Activated naive CD4-positive, alpha-beta T cell treated with anti-CD3 and anti-CD28 coated beads for 36 hours (primary cell): ENCODE measurements at regions of chr11 and their contacts with region 1.

Region 1: DNA sequence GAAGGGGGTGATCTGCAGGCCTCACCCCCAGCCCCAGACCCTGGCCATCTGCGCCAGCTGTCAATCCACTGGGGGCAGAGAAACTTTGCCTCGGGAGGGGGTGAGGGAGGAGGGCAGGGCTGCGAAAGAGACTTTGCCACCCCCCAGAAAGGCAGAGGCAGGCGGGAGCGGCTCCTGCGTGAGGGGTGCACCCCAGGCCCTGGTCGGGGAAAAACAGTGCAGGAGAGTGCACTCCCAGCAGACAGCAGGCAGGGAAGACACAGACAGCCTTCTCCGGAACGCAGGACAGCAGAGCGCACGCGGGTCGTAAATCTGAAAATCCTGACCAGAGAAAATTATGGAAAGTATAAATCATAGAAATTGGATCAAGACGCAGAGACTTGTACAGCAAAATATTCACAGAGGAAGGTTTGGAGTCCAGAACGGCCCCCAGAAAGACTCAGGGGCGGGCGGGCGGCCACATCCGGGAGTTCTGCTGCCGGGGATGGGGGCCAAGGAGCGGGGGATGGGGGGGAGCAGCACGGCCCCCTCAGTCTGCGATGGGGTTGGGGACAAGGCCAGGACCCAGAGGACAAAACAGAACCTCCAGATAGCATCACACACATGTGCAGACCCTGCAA is 8.0 kb upstream of the MRPL23 start:
- DNase-seq: no peak
- H3K4me3 Mint-ChIP-seq: no peak overlapping the region
- H3K27ac Mint-ChIP-seq: no peak overlapping the region
- H3K4me1 Mint-ChIP-seq: peaks cover 3% of the 10 kb centered on the region
- H3K27me3 Mint-ChIP-seq: no peaks in the 10 kb centered on the region

Region 2: DNA sequence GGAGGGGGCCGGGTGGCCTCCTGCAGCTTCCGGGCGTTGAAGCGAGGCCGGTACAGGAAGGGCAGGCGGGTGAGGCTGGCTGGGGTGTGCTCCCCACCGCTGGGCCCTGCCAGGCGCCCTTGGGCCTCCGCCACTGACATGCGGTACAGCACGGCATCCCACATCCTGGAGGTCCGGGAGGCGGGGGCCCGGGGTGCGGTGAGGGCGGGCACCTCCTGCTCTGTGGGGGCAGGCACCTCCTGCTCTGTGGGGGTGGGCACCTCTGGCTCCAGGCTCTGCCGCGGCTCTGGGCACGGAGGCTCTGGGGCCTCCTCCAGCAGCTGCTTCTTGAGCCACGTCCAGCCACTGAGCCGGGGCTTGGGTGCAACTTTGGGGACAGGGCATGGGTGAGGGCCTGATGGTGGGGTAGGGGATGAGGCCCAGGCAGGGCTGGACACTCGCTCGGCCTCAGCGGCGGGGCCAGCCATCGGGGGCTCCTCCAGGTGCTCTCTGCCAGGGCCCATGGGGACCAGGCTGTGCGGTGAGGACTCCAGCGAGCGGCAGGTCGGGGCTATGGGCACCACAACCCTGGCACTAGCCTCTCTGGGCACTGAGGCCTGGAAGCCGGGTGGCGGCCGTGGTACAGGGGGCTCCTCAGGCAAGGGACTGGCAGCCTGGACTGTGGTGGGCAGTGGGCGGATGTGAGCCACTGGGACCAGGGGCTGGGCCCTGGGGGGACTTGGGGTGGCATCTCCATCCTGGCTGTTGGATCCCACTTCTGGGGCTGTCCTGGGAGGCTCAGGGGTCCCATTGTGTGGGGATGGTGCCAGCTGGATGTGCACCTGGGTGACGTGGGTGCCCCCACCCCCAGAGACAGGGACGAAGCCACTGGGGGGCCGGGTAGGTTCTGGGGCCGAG is 49.6 kb before region 1 on chr11:
- CTCF ChIA-PET with region 1: no interaction called
- intact Hi-C with region 1: loop called (anchors 1 kb)
- DNase-seq: peak; percentile 84
- H3K4me3 Mint-ChIP-seq: peak overlapping the region; percentile 79
- H3K27ac Mint-ChIP-seq: peak overlapping the region; percentile 71
- H3K4me1 Mint-ChIP-seq: peaks cover 23% of the 10 kb centered on the region
- H3K27me3 Mint-ChIP-seq: no peaks in the 10 kb centered on the region

Region 3: DNA sequence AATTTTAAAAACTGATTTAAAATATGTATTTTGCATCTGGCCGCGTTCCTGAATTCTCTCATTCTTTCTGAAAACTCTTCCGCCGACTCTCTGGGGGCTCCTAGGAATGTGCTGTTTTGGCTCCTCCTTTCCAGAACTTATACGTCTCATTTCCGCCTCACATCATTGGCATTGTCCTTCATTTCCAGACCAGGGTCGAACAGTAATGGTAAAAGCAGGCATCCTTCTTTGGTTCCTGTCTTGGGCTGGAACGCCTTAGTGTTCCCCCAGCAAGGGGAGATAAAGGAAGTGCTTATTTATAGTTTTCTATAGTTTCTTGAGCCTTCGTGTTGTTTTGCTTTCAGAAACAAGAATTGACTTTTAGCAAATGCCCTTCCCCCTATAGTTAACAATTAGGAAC is 30.5 kb before region 1 on chr11:
- CTCF ChIA-PET with region 1: no interaction called
- intact Hi-C with region 1: no loop called
- DNase-seq: no peak
- H3K4me3 Mint-ChIP-seq: no peak overlapping the region
- H3K27ac Mint-ChIP-seq: no peak overlapping the region
- H3K4me1 Mint-ChIP-seq: no peaks in the 10 kb centered on the region
- H3K27me3 Mint-ChIP-seq: no peaks in the 10 kb centered on the region

Region 4: DNA sequence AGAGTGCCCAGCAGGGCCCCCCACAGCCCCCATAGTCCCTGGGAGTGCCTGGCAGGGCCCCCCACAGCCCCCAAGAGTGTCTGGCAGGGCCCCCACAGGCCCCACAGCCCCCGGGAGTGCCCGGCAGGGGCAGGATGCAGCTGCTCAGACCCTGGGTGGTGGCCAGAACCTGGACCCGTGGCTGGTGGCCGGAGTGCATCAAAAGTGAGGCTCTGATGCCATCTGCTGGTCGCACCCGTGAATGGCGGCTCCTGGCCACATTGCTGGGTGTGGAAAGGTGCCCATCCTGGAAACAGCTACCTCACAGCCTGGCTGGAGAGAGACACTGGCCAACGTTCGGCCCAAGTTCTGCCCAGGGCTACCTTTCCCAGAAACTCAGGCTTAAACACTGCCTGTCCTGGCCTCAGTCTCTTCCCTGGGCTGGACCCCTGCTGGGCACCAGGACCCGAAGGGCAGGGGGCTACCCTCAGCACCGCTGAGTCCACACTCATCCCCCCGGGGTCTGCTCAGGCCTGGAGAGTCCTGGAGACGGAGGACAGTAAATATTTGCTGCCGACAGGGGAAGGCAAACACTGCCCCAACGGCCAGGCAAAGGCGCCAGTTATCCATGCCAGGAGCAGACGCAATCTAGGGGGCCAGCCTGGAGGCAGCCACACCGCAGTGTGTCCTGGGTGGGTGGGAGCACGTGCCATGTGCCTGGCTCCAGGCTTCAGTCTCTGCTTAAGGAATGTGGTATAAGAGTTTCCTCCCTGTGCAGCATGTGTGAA is 217.5 kb after region 1 on chr11:
- CTCF ChIA-PET with region 1: no interaction called
- intact Hi-C with region 1: no loop called
- DNase-seq: peak; percentile 67
- H3K4me3 Mint-ChIP-seq: no peak overlapping the region
- H3K27ac Mint-ChIP-seq: no peak overlapping the region
- H3K4me1 Mint-ChIP-seq: peaks cover 3% of the 10 kb centered on the region
- H3K27me3 Mint-ChIP-seq: peaks cover 3% of the 10 kb centered on the region